ENCODE measurements at regions of chr7 and their contacts with region 1.

Region 1: DNA sequence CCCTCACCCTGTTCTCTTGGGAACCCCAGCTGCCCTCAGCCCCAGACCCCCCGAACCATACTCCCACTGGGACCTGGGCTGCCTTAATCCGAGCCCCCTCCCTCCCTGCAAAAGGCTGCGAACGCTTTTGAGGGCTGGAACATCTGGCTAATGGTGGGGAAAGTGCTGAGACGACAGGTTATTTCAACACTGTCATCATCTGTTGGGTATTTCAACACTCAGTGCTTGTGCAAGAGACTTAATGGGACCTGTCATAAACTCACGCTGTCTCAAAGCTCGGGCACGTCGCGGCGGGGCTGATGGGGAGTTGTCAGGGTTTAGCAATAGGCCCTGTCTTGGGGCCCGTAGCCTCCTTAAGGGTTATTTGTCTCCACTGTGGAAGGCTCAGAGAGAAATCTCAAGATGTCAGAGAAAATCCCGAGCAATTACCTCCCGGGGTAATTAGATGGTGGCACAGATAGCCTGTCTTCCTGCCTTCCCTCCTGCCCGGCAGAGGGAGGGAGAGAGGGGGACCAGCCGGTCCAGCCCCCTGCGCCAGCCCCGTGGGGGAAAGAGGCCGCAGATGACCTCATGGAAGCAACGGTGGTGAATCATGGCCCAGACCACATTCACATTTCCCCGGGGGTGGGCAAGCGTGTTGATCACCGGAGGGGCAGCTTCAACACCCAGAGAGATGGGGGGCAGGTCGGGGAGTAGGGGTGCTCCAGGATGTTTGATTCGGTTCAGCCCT is 88.7 kb upstream of the MYL10 start:
- DNase-seq: peak; percentile 55
- H3K4me3 ChIP-seq: no peak overlapping the region
- CTCF ChIP-seq: no peak

Region 2: GRCh38 chr7:101688183-101688831 is 29.5 kb before region 1 on chr7:
- CTCF ChIA-PET with region 1: interaction called, 12 read pairs
- POLR2A ChIA-PET with region 1: no interaction called
- DNase-seq: no peak
- H3K4me3 ChIP-seq: peak overlapping the region; percentile 40
- CTCF ChIP-seq: peak; percentile 96

Measured in AG04449 (cell line).